ENCODE measurements at regions of chr1 and their contacts with region 1.

Region 1: GRCh38 chr1:78617615-78618026 is 2.6 kb upstream of the IFI44L start:
- DNase-seq: peak; percentile 44
- H3K4me3 ChIP-seq: no peak overlapping the region; a peak in 1 of 4 replicates
- H3K27ac ChIP-seq: no peak overlapping the region
- H3K4me1 ChIP-seq: peaks cover 6 to 24% of the 10 kb centered on the region in 2 experiments; a peak in 3 of 4 replicates
- H3K27me3 ChIP-seq: no peaks in the 10 kb centered on the region
- CTCF ChIP-seq: peak; percentile 83
- EP300 ChIP-seq: peak in 1 of 2 experiments; percentile 21; a peak in 1 of 4 replicates
- RAD21 ChIP-seq: peak; percentile 91

Region 2: GRCh38 chr1:78145105-78145580 is 472.5 kb before region 1 on chr1:
- CTCF ChIA-PET with region 1: interaction called, 207 read pairs
- POLR2A ChIA-PET with region 1: no interaction called
- DNase-seq: peak; percentile 48
- H3K4me3 ChIP-seq: no peak overlapping the region; a peak in 1 of 4 replicates
- H3K27ac ChIP-seq: peak overlapping the region in 1 of 2 experiments; percentile 62; a peak in 1 of 4 replicates
- H3K4me1 ChIP-seq: peaks cover 10 to 11% of the 10 kb centered on the region in 2 experiments; a peak in 3 of 4 replicates
- H3K27me3 ChIP-seq: no peaks in the 10 kb centered on the region
- CTCF ChIP-seq: peak; percentile 95
- EP300 ChIP-seq: no peak
- RAD21 ChIP-seq: peak; percentile 98

Region 3: DNA sequence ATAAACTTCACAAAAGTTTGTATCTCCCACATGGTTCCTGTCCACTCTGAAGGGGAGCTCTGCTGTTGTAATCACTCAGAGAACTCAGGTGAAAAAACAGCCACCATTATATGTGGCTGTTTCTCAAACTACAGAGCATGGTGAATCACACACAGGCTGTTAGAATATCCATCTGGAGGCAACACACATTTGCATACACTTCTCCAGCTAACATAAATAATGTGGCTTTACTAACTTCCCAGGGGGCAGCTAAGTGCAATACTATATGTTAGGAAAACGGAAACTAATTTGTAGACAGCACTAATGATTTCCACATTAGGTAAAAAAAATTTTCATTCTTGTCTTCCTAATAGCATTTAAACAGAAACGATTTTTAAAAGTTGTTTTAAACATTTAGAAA is 77.6 kb before region 1 on chr1:
- CTCF ChIA-PET with region 1: no interaction called
- POLR2A ChIA-PET with region 1: no interaction called
- DNase-seq: no peak
- H3K4me3 ChIP-seq: no peak overlapping the region
- H3K27ac ChIP-seq: no peak overlapping the region
- H3K4me1 ChIP-seq: 0 out of 4 replicates have a peak, but pooled peaks cover 0 to 12% of the 10 kb centered on the region in 2 experiments
- H3K27me3 ChIP-seq: no peaks in the 10 kb centered on the region
- CTCF ChIP-seq: no peak
- EP300 ChIP-seq: no peak
- RAD21 ChIP-seq: no peak

Region 4: DNA sequence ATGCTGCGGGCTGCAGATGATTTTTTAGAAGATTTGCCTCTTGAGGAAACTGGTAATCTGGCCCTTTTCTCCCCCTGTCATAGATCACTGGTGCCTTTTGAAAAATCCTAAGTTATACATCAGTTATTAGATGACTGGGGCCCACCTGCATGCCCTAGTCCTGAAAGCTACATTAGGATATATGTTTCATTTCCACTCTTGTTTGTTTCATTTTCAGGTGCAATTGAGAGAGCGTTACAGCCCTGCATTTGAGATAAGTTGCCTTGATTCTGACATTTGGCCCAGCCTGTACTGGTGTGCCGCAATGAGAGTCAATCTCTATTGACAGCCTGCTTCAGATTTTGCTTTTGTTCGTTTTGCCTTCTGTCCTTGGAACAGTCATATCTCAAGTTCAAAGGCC is 23.9 kb after region 1 on chr1:
- CTCF ChIA-PET with region 1: interaction called, 13 read pairs
- POLR2A ChIA-PET with region 1: no interaction called
- DNase-seq: no peak
- H3K4me3 ChIP-seq: no peak overlapping the region
- H3K27ac ChIP-seq: no peak overlapping the region
- H3K4me1 ChIP-seq: no peaks in the 10 kb centered on the region
- H3K27me3 ChIP-seq: no peaks in the 10 kb centered on the region
- CTCF ChIP-seq: no peak
- EP300 ChIP-seq: no peak
- RAD21 ChIP-seq: no peak

Region 5: GRCh38 chr1:78676347-78676982 is 58.8 kb after region 1 on chr1:
- CTCF ChIA-PET with region 1: interaction called, 61 read pairs
- POLR2A ChIA-PET with region 1: no interaction called
- DNase-seq: peak; percentile 28
- H3K4me3 ChIP-seq: no peak overlapping the region; a peak in 1 of 4 replicates
- H3K27ac ChIP-seq: no peak overlapping the region
- H3K4me1 ChIP-seq: no peaks in the 10 kb centered on the region
- H3K27me3 ChIP-seq: no peaks in the 10 kb centered on the region
- CTCF ChIP-seq: peak; percentile 93
- EP300 ChIP-seq: no peak
- RAD21 ChIP-seq: peak; percentile 84